ENCODE measurements at regions of chr17 and their contacts with region 1.

Region 1: GRCh38 chr17:69335058-69335457 is 8.1 kb upstream of the ABCA5 start:
- DNase-seq: no peak
- H3K4me3 Mint-ChIP-seq: no peak overlapping the region
- H3K27ac Mint-ChIP-seq: peak overlapping the region; percentile 10
- H3K4me1 Mint-ChIP-seq: no peaks in the 10 kb centered on the region
- H3K27me3 Mint-ChIP-seq: no peaks in the 10 kb centered on the region
- CTCF ChIP-seq: no peak

Region 2: GRCh38 chr17:69390795-69391501 is 55.9 kb after region 1 on chr17:
- CTCF ChIA-PET with region 1: interaction called, 4 read pairs
- intact Hi-C with region 1: loop called (anchors 5 kb)
- DNase-seq: no peak
- H3K4me3 Mint-ChIP-seq: peak overlapping the region; percentile 25
- H3K27ac Mint-ChIP-seq: no peak overlapping the region
- H3K4me1 Mint-ChIP-seq: peaks cover 10% of the 10 kb centered on the region
- H3K27me3 Mint-ChIP-seq: no peaks in the 10 kb centered on the region
- CTCF ChIP-seq: no peak

Region 3: DNA sequence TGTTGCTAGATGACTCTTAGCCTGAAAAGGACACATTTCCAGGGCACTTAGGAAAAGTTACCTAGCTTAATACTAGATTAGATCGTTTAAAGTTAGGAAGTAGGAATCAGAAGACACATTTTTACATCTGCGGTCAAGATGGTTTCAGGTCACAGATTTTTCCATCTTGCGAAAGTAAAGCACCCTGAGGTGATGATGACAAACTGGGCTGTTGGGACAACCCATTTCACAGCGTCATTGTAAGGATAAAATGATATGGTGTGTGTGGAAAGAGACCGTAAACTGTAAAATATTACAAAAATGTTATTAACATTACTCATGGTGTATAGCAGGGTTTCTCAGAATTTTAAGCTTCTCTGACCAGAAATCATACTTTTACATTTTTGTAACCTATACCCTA is 69.3 kb after region 1 on chr17:
- CTCF ChIA-PET with region 1: no interaction called
- intact Hi-C with region 1: no loop called
- DNase-seq: no peak
- H3K4me3 Mint-ChIP-seq: no peak overlapping the region
- H3K27ac Mint-ChIP-seq: no peak overlapping the region
- H3K4me1 Mint-ChIP-seq: no peaks in the 10 kb centered on the region
- H3K27me3 Mint-ChIP-seq: no peaks in the 10 kb centered on the region
- CTCF ChIP-seq: no peak

Region 4: GRCh38 chr17:69473841-69474831 is 139.1 kb after region 1 on chr17:
- CTCF ChIA-PET with region 1: no interaction called
- intact Hi-C with region 1: no loop called
- DNase-seq: no peak
- H3K4me3 Mint-ChIP-seq: no peak overlapping the region
- H3K27ac Mint-ChIP-seq: no peak overlapping the region
- H3K4me1 Mint-ChIP-seq: peaks cover under 1% of the 10 kb centered on the region
- H3K27me3 Mint-ChIP-seq: no peaks in the 10 kb centered on the region
- CTCF ChIP-seq: no peak

Region 5: GRCh38 chr17:69485901-69486643 is 151.0 kb after region 1 on chr17:
- CTCF ChIA-PET with region 1: no interaction called
- intact Hi-C with region 1: no loop called
- DNase-seq: no peak
- H3K4me3 Mint-ChIP-seq: no peak overlapping the region
- H3K27ac Mint-ChIP-seq: no peak overlapping the region
- H3K4me1 Mint-ChIP-seq: no peaks in the 10 kb centered on the region
- H3K27me3 Mint-ChIP-seq: no peaks in the 10 kb centered on the region
- CTCF ChIP-seq: no peak

Region 6: DNA sequence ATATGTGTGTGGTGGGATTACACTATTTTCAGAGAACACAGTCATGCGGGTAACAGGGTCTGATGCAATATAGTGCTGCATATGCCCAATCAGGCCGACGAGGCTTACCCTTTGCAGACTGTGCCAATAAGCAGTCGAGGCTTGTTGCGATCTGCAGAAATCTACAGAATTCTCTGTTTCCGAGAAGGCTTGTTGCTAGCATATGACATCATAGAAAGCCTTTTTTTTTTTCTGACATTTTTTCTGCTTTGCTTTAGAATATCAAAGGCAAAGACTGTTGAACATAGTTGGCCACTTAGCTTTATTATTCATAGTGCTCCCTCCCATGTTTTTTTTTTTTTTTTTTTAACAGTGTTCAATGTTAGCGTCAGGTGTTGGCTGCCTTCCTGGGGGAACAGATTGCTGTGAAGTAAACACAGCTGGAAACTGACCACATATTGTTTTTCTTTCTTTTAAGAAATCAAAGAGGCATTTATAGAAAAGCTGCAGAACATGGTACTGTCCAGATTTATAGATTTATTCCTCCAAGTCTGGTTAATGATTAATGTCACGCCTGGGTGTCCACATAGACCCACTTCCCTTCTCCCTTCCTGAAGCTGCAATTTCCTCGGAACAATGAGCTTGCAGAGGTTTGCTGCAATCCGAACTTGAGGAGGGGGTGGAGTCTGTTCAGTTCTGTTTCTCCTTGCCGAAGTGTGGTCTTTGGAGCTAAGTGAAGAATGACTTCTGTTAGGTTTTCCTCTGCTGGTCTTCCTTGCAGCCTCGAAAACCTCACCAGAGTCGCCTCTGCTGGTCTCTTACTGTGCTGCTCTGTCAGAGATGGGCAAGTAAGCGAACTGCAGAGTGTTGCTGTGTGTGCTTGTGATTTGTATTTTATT is 166.8 kb after region 1 on chr17:
- CTCF ChIA-PET with region 1: interaction called, 3 read pairs
- intact Hi-C with region 1: loop called (anchors 5 kb)
- DNase-seq: peak; percentile 51
- H3K4me3 Mint-ChIP-seq: peak overlapping the region; percentile 80
- H3K27ac Mint-ChIP-seq: peak overlapping the region; percentile 78
- H3K4me1 Mint-ChIP-seq: peaks cover 41% of the 10 kb centered on the region
- H3K27me3 Mint-ChIP-seq: no peaks in the 10 kb centered on the region
- CTCF ChIP-seq: no peak

Region 7: DNA sequence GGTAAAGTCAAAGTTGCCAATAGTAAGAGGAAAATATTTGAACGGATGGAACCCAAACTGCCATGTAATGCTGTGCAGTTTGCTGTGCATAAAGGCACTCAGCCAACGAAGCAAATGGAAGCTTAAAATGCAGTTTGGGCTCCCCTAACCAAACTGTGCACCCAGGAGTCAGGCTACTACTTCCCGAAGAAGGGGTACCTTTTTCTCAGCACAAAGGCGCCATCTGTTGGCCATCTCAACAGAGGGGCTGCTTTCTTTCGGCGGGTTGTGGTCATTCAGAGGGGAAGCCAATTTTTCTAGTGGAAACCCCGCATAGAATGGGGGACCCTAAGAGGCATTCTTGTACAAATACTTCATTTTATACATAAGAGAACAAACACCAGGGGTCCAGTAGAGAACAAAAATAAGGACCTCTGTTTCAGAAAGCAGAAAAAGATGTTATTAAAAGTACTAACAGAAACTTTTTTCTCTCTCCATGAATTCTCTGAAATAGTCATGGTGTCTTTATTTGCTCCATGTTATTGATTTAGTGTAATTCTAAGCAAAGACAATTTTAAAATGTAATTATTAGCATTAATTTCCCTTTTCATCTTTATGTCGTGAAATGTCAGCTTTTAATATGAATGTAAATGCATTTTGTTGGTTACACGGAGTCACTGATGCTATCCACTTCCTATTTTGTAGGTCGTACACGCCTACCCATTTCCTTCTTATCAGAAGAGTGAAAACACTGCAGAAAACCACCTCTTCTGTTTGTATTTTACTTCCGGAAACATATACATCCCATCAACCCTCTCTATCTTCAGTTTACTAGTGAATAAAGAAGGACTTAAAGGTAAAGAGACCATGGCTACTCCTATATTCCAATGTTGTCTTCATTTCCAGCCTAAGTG is 1287.6 kb after region 1 on chr17:
- CTCF ChIA-PET with region 1: no interaction called
- intact Hi-C with region 1: loop called (anchors 10 kb)
- DNase-seq: peak; percentile 58
- H3K4me3 Mint-ChIP-seq: no peak overlapping the region
- H3K27ac Mint-ChIP-seq: no peak overlapping the region
- H3K4me1 Mint-ChIP-seq: no peaks in the 10 kb centered on the region
- H3K27me3 Mint-ChIP-seq: peaks cover under 1% of the 10 kb centered on the region
- CTCF ChIP-seq: peak; percentile 29

Region 8: DNA sequence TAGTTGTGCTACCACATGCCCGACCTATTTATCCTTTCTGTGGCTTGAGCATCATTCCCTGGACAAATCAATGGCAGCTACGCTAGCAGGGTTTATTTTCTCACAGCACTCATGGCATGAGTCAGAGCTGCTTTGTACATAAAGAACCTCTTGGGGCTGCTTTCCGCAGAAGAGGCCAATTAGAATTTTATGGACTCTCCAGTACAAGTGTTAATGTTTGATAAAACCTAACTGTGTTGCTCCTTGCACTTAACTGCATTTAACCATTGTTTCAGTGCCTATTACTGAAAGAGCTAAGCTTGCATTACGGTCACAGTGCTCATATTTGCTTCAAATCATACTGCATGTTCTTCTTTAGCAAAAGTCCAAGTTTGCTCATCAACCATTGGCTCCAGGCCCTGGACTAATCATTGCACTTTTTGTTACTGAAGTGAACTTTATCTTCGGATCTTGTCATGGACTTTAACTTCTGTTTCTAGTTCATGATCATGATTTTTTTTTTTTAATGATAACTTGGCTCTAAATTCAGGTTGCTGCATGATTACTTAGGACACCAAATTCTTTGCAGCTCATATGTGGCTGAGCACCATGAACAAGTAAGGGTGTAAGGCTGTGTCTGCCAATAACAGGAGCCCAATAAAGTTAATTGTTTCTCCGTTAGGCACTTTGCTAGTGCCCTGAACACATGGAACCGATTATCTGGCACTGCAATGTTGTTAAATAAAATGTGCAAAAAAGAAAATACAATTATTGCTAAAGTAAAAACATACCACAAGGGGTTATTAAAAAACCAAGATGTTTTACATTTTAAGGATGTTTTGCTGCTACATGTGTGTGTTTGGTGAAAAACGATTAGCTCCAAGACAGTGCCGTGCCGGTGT is 1326.5 kb after region 1 on chr17:
- CTCF ChIA-PET with region 1: no interaction called
- intact Hi-C with region 1: no loop called
- DNase-seq: peak; percentile 10
- H3K4me3 Mint-ChIP-seq: no peak overlapping the region
- H3K27ac Mint-ChIP-seq: no peak overlapping the region
- H3K4me1 Mint-ChIP-seq: no peaks in the 10 kb centered on the region
- H3K27me3 Mint-ChIP-seq: no peaks in the 10 kb centered on the region
- CTCF ChIP-seq: no peak